PC-9 (cell line): ENCODE measurements at regions of chr11 and their contacts with region 1.

Region 1: GRCh38 chr11:76207642-76208401 is 1.5 kb upstream of the WNT11 start:
- DNase-seq: peak; percentile 76 to 89
- H3K4me3 ChIP-seq: peak overlapping the region; percentile 73
- H3K27ac ChIP-seq: no peak overlapping the region
- H3K4me1 ChIP-seq: peaks cover 24% of the 10 kb centered on the region
- H3K27me3 ChIP-seq: peaks cover 17% of the 10 kb centered on the region
- CTCF ChIP-seq: peak; percentile 96

Region 2: GRCh38 chr11:75547580-75548058 is 660.2 kb before region 1 on chr11:
- CTCF ChIA-PET with region 1: no interaction called
- POLR2A ChIA-PET with region 1: no interaction called
- intact Hi-C with region 1: loop called (anchors 2 kb)
- DNase-seq: peak; percentile 61 to 72
- H3K4me3 ChIP-seq: no peak overlapping the region
- H3K27ac ChIP-seq: no peak overlapping the region
- H3K4me1 ChIP-seq: no peaks in the 10 kb centered on the region
- H3K27me3 ChIP-seq: no peaks in the 10 kb centered on the region
- CTCF ChIP-seq: peak; percentile 98

Region 3: GRCh38 chr11:75896843-75897419 is 310.9 kb before region 1 on chr11:
- CTCF ChIA-PET with region 1: interaction called, 10 read pairs
- POLR2A ChIA-PET with region 1: no interaction called
- intact Hi-C with region 1: loop called (anchors 2 kb)
- DNase-seq: peak in 1 of 2 experiments; percentile 64
- H3K4me3 ChIP-seq: no peak overlapping the region
- H3K27ac ChIP-seq: no peak overlapping the region
- H3K4me1 ChIP-seq: no peaks in the 10 kb centered on the region
- H3K27me3 ChIP-seq: no peaks in the 10 kb centered on the region
- CTCF ChIP-seq: peak; percentile 95

Region 4: GRCh38 chr11:76235233-76236091 is 27.6 kb after region 1 on chr11:
- CTCF ChIA-PET with region 1: interaction called, 22 read pairs
- POLR2A ChIA-PET with region 1: interaction called, 5 read pairs
- intact Hi-C with region 1: loop called (anchors 2 kb)
- DNase-seq: peak; percentile 86 to 92
- H3K4me3 ChIP-seq: peak overlapping the region; percentile 66
- H3K27ac ChIP-seq: peak overlapping the region; percentile 48
- H3K4me1 ChIP-seq: peaks cover 14% of the 10 kb centered on the region
- H3K27me3 ChIP-seq: no peaks in the 10 kb centered on the region
- CTCF ChIP-seq: no peak

Region 5: DNA sequence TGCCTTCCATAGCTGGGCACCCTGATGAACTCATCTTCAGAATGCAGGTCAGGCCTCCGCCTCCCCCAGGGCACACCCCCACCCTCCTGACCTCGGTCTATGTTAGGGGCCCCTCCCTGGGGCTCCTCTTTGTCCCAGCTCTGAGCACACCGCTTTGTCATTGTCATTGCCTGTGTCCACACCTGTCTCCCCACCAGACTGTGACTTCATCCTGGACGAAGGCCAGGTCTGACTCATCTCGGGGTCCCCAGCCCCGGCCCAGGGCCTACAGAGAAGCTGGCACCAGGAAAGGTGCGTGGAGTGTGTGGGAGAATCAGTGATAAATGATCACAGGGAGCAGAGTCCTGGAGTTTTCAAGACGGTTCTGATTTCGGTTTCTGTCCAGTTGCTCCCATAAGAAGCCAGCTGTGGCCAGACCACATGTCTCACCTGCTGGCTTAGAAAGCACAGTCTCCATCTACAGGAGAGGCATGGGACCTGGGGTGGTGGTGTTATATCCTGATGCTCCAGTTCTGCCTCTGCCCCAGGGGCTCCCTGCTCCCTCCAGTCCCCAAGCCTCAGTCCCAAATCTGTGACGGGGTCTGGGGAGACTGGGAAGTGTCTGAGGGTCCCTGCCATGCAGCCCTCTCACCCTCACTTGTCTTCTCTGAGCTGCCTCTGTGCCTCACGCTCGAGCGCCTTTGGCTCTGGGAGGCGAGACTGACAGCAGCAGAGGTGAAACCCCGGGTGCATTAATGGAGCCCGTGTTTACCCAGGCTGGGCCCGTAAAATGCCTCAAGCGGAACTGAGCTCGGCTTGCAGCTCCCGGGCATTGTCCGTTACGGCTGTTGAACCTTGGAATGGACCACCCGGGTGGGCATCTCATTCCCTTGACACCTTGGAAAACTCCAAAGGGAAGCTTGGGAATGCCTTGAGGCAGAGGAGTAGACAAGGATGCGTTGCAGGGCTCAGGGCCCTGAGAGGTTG is 84.0 kb after region 1 on chr11:
- CTCF ChIA-PET with region 1: interaction called, 6 read pairs
- POLR2A ChIA-PET with region 1: interaction called, 6 read pairs
- intact Hi-C with region 1: loop called (anchors 1 kb)
- DNase-seq: peak; percentile 74 to 85
- H3K4me3 ChIP-seq: no peak overlapping the region
- H3K27ac ChIP-seq: no peak overlapping the region
- H3K4me1 ChIP-seq: peaks cover 18% of the 10 kb centered on the region
- H3K27me3 ChIP-seq: no peaks in the 10 kb centered on the region
- CTCF ChIP-seq: peak; percentile 47; the same call in 1 of the 2 replicates

Region 6: GRCh38 chr11:76444384-76445123 is 236.7 kb after region 1 on chr11 and contains the start of gene EMSY:
- CTCF ChIA-PET with region 1: no interaction called
- POLR2A ChIA-PET with region 1: interaction called, 5 read pairs
- intact Hi-C with region 1: loop called (anchors 2 kb)
- DNase-seq: peak; percentile 95 to 97
- H3K4me3 ChIP-seq: peak within 1 kb of the TSS; percentile 73
- H3K27ac ChIP-seq: peak within 1 kb of the TSS; percentile 66
- H3K4me1 ChIP-seq: peaks cover 20% of the 10 kb centered on the region
- H3K27me3 ChIP-seq: no peaks in the 10 kb centered on the region
- CTCF ChIP-seq: no peak
- total RNA-seq, gene EMSY: 24.9 and 37.4 TPM in 2 replicates

Region 7: DNA sequence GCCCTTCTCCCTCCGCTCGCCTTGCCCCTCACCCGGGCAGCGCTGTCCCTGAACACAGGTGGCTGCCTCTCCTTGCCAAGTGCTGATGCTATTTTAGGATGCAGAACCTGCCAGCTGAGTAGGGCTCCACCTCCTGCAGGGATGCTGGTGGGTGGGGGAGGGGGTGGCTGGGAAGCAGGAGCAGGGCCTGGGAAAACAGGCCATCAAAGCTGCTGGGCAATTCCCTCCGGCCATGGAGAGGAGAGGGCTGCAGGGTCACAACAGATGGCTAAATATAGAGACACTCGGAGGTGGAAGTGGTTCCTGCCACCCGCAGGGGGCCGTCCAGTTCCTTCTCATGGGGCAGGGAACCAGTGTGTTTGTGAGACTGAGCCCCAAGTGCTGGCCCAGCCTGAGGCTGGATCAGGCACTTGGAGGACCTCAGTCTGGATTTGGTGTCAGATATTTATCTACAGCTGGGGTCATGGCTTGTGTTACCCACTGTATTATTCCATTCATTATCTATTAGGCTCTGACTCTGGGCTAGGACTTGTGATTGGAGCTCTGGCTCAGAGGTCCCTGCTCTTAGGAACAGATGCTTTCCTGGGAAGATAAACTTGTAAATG is 403.2 kb after region 1 on chr11:
- CTCF ChIA-PET with region 1: no interaction called
- POLR2A ChIA-PET with region 1: no interaction called
- intact Hi-C with region 1: no loop called
- DNase-seq: no peak
- H3K4me3 ChIP-seq: no peak overlapping the region
- H3K27ac ChIP-seq: no peak overlapping the region
- H3K4me1 ChIP-seq: no peaks in the 10 kb centered on the region
- H3K27me3 ChIP-seq: no peaks in the 10 kb centered on the region; the same call in 1 of the 2 replicates
- CTCF ChIP-seq: no peak

Region 8: DNA sequence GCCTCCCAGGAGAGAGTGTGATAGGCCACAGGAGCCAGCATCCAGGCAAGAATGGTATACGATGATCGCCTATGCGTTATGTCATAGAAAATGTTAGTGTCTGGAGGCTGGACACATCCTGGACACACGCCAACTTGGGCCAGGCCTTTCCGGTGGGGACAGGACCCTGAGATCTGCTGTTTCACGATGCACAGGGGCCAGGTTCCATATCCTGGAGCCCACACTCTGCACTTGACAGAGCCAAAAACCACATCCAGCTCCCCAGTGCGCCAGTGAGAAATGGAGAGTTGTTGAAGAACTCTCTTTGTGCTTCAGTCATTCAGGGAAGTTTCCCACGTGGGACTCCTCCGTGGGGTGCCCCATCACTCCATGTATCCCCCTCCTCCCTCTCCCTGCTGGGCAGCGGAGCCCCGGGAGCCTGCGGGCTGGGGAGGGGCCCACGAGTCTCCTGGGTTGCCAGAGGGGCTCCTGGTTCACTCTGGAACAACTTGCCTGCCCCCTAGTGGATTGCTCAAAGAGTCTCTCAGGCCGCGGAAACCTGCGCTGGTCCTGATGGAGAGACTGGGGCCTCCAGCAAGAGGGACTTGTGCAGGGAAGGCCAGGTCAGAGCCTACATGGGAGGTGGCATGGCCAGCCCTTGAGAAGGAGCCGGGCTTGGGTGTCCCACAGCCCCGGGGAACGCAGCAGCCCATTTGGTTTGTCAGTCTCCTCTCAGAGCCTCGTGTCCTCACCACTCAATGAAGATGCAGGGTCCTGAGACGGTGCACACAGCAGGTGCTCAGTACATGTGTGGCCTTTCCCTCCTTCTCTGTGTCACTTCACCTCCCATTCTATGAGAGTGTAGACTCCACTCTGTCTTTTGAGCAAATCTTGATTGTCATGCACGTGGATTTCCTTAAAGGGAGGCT is 472.9 kb after region 1 on chr11:
- CTCF ChIA-PET with region 1: interaction called, 3 read pairs
- POLR2A ChIA-PET with region 1: no interaction called
- intact Hi-C with region 1: loop called (anchors 2 kb)
- DNase-seq: peak; percentile 54 to 68
- H3K4me3 ChIP-seq: no peak overlapping the region
- H3K27ac ChIP-seq: no peak overlapping the region
- H3K4me1 ChIP-seq: no peaks in the 10 kb centered on the region; the same call in 1 of the 2 replicates
- H3K27me3 ChIP-seq: no peaks in the 10 kb centered on the region
- CTCF ChIP-seq: peak; percentile 95

Region 9: GRCh38 chr11:76698321-76699060 is 490.7 kb after region 1 on chr11:
- CTCF ChIA-PET with region 1: no interaction called
- POLR2A ChIA-PET with region 1: no interaction called
- intact Hi-C with region 1: no loop called
- DNase-seq: no peak
- H3K4me3 ChIP-seq: no peak overlapping the region
- H3K27ac ChIP-seq: no peak overlapping the region
- H3K4me1 ChIP-seq: peaks cover 37% of the 10 kb centered on the region
- H3K27me3 ChIP-seq: no peaks in the 10 kb centered on the region
- CTCF ChIP-seq: peak; percentile 59; the same call in 1 of the 2 replicates